WTC11 (cell line): ENCODE measurements at regions of chr16 and their contacts with region 1.

Region 1: GRCh38 chr16:24070851-24071250 is 185.3 kb upstream of the CACNG3 start:
- DNase-seq: peak; percentile 70
- ATAC-seq: peak; percentile 100
- H3K4me3 Mint-ChIP-seq: no peak overlapping the region
- H3K27ac Mint-ChIP-seq: no peak overlapping the region; the same call in 1 of the 2 replicates
- H3K4me1 Mint-ChIP-seq: peaks cover 11% of the 10 kb centered on the region
- H3K27me3 Mint-ChIP-seq: peaks cover 3% of the 10 kb centered on the region; the same call in 1 of the 2 replicates
- CTCF ChIP-seq: peak; percentile 55

Region 2: GRCh38 chr16:24041826-24042631 is 28.8 kb before region 1 on chr16:
- CTCF ChIA-PET with region 1: interaction called, 76 read pairs
- POLR2A ChIA-PET with region 1: no interaction called
- DNase-seq: peak; percentile 83
- ATAC-seq: peak; percentile 37
- H3K4me3 Mint-ChIP-seq: no peak overlapping the region
- H3K27ac Mint-ChIP-seq: no peak overlapping the region
- H3K4me1 Mint-ChIP-seq: peaks cover 21% of the 10 kb centered on the region
- H3K27me3 Mint-ChIP-seq: no peaks in the 10 kb centered on the region
- CTCF ChIP-seq: peak; percentile 79

Region 3: DNA sequence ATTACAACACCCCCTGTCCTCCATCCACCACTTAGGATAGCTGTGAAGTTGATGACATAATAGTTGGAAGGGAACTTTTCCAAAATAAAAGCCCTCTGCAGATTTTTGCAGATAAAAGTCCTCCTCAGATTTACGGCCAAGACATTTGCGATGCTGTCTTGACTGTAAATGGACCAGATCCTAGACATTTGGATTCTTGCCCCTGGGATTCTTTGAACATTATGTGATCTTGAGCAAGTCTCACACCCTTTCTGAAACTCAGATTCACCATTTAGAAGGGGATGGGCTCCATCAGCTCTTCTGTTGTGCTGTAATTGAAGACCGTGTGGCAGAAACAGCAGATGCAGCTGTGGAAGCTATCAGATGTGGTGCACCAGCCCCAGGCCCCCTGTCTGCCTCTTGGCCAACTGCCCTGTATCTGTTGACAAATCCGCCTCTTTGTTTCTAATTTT is 31.4 kb after region 1 on chr16:
- CTCF ChIA-PET with region 1: interaction called, 47 read pairs
- POLR2A ChIA-PET with region 1: no interaction called
- DNase-seq: peak; percentile 28
- ATAC-seq: peak; percentile 54
- H3K4me3 Mint-ChIP-seq: no peak overlapping the region
- H3K27ac Mint-ChIP-seq: peak overlapping the region; percentile 45; the same call in 1 of the 2 replicates
- H3K4me1 Mint-ChIP-seq: peaks cover 61% of the 10 kb centered on the region
- H3K27me3 Mint-ChIP-seq: no peaks in the 10 kb centered on the region; the same call in 1 of the 2 replicates
- CTCF ChIP-seq: no peak

Region 4: GRCh38 chr16:24139282-24139681 is 68.4 kb after region 1 on chr16:
- CTCF ChIA-PET with region 1: interaction called, 21 read pairs
- POLR2A ChIA-PET with region 1: no interaction called
- DNase-seq: no peak
- ATAC-seq: peak; percentile 84
- H3K4me3 Mint-ChIP-seq: peak overlapping the region; percentile 26
- H3K27ac Mint-ChIP-seq: peak overlapping the region; percentile 100
- H3K4me1 Mint-ChIP-seq: peaks cover 64% of the 10 kb centered on the region
- H3K27me3 Mint-ChIP-seq: peaks cover 3% of the 10 kb centered on the region; the same call in 1 of the 2 replicates
- CTCF ChIP-seq: no peak

Region 5: GRCh38 chr16:24189941-24190340 is 119.1 kb after region 1 on chr16:
- CTCF ChIA-PET with region 1: interaction called, 11 read pairs
- POLR2A ChIA-PET with region 1: no interaction called
- DNase-seq: no peak
- ATAC-seq: no peak
- H3K4me3 Mint-ChIP-seq: no peak overlapping the region
- H3K27ac Mint-ChIP-seq: no peak overlapping the region
- H3K4me1 Mint-ChIP-seq: peaks cover 16% of the 10 kb centered on the region
- H3K27me3 Mint-ChIP-seq: no peaks in the 10 kb centered on the region
- CTCF ChIP-seq: no peak

Region 6: DNA sequence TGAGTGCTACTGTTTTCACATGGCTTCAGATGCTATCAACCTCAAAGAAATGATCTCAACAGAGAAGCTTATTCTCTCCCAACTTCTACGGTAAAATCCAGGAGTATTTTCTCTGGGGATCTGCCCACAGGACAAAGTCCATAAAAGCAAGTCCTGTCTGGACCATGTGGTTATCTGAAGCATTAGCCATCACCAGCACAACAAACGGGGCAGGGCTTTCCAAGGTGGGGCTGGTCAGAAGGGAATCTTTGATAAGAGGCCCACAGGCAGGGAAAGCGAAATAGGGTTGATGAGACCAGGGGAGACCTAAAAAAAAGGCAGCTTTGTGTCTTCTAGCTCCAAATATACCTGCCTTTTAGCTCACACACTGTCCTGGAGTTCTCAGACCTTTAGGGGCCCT is 146.6 kb after region 1 on chr16:
- CTCF ChIA-PET with region 1: interaction called, 17 read pairs
- POLR2A ChIA-PET with region 1: no interaction called
- DNase-seq: no peak
- ATAC-seq: no peak
- H3K4me3 Mint-ChIP-seq: no peak overlapping the region
- H3K27ac Mint-ChIP-seq: no peak overlapping the region
- H3K4me1 Mint-ChIP-seq: peaks cover 15% of the 10 kb centered on the region
- H3K27me3 Mint-ChIP-seq: no peaks in the 10 kb centered on the region; the same call in 1 of the 2 replicates
- CTCF ChIP-seq: no peak

Region 7: GRCh38 chr16:24504472-24505345 is 433.9 kb after region 1 on chr16:
- CTCF ChIA-PET with region 1: interaction called, 54 read pairs
- POLR2A ChIA-PET with region 1: no interaction called
- DNase-seq: peak; percentile 64
- ATAC-seq: peak; percentile 95
- H3K4me3 Mint-ChIP-seq: no peak overlapping the region
- H3K27ac Mint-ChIP-seq: no peak overlapping the region
- H3K4me1 Mint-ChIP-seq: no peaks in the 10 kb centered on the region
- H3K27me3 Mint-ChIP-seq: peaks cover 11% of the 10 kb centered on the region
- CTCF ChIP-seq: peak; percentile 48